CD4-positive, alpha-beta T cell (primary cell): ENCODE measurements at regions of chr1 and their contacts with region 1.

Region 1: GRCh38 chr1:171313835-171314320 is at the start of gene FMO4:
- DNase-seq: peak; percentile 57 to 97 (median 70)
- ATAC-seq: peak; percentile 100
- H3K4me3 ChIP-seq: peak within 1 kb of the TSS; percentile 41
- H3K4me3 Mint-ChIP-seq: peak within 1 kb of the TSS; percentile 66
- H3K27ac ChIP-seq: peak within 1 kb of the TSS in 1 of 2 donors; percentile 41
- H3K27ac Mint-ChIP-seq: peak within 1 kb of the TSS; percentile 81
- H3K4me1 ChIP-seq: no peaks in the 10 kb centered on the region
- H3K4me1 Mint-ChIP-seq: peaks cover 17% of the 10 kb centered on the region
- H3K27me3 ChIP-seq: no peaks in the 10 kb centered on the region
- H3K27me3 Mint-ChIP-seq: no peaks in the 10 kb centered on the region
- CTCF ChIP-seq: peak; percentile 78
- total RNA-seq, gene FMO4: 0.70 to 1.1 TPM

Region 2: DNA sequence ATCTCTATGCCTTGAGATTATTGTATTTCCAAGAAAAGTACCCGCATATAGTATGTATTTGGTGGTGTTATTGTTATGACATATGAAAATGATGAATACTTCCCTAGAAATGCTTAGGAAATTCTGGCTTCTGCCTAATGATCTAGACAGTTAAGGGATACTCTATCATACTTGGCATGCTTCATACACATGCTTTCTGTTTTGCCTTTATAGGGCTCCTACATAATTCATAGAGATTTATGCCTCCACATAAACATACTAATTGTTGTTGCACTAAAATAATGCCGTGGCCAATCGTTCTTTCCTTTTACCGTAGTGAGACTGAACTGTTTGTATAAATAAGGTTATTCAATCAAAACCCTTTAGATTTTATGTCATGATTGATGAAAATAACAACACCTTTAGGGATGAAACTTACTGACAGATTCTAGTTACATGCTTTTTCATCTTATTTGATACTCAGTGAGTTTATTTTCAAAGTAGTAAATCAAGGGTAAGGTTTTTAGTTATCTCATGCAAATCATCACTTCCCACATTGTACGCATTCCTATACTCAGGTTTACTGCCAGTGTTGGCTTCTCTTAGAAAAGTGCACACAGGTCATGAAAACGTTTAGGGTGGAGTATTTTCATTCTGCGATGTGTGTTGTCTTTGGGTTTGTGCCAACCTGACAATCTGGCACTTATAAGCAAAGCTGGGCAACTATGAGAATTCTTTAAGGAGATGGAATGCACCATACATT is 1379.7 kb before region 1 on chr1:
- CTCF ChIA-PET with region 1: no interaction called
- POLR2A ChIA-PET with region 1: no interaction called
- intact Hi-C with region 1: loop called (anchors 5 kb)
- DNase-seq: no peak
- ATAC-seq: no peak
- H3K4me3 ChIP-seq: no peak overlapping the region
- H3K4me3 Mint-ChIP-seq: no peak overlapping the region
- H3K27ac ChIP-seq: no peak overlapping the region
- H3K27ac Mint-ChIP-seq: no peak overlapping the region
- H3K4me1 ChIP-seq: no peaks in the 10 kb centered on the region
- H3K4me1 Mint-ChIP-seq: no peaks in the 10 kb centered on the region
- H3K27me3 ChIP-seq: no peaks in the 10 kb centered on the region
- H3K27me3 Mint-ChIP-seq: no peaks in the 10 kb centered on the region
- CTCF ChIP-seq: no peak

Region 3: GRCh38 chr1:170175056-170175455 is 1138.8 kb before region 1 on chr1:
- CTCF ChIA-PET with region 1: no interaction called
- POLR2A ChIA-PET with region 1: no interaction called
- intact Hi-C with region 1: no loop called
- DNase-seq: no peak
- ATAC-seq: no peak
- H3K4me3 ChIP-seq: no peak overlapping the region
- H3K4me3 Mint-ChIP-seq: no peak overlapping the region
- H3K27ac ChIP-seq: no peak overlapping the region
- H3K27ac Mint-ChIP-seq: no peak overlapping the region
- H3K4me1 ChIP-seq: no peaks in the 10 kb centered on the region
- H3K4me1 Mint-ChIP-seq: no peaks in the 10 kb centered on the region
- H3K27me3 ChIP-seq: no peaks in the 10 kb centered on the region
- H3K27me3 Mint-ChIP-seq: no peaks in the 10 kb centered on the region
- CTCF ChIP-seq: no peak

Region 4: DNA sequence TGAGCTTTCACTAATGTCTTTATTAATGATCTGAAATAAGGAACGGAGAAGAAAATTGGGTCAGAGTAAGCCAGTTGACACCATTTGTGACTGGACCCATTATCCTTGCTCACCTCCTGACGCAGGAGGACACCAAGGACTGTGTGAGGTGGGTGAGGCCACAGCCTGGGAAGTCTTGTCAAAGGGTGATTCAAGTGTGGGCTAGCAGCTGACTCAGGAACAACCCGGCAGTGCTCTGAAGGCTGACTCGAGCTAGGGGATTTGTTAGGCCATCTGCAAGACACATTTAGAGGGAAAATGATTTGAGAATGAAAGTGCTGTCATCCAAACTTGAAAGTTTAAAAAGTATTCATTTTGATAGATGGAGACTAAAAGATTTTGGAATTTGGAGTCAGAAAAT is 628.7 kb before region 1 on chr1:
- CTCF ChIA-PET with region 1: interaction called, 5 read pairs
- POLR2A ChIA-PET with region 1: no interaction called
- intact Hi-C with region 1: loop called in 1 of 2 experiments (anchors 5 kb)
- DNase-seq: no peak
- ATAC-seq: no peak
- H3K4me3 ChIP-seq: no peak overlapping the region
- H3K4me3 Mint-ChIP-seq: no peak overlapping the region
- H3K27ac ChIP-seq: no peak overlapping the region
- H3K27ac Mint-ChIP-seq: no peak overlapping the region
- H3K4me1 ChIP-seq: no peaks in the 10 kb centered on the region
- H3K4me1 Mint-ChIP-seq: no peaks in the 10 kb centered on the region
- H3K27me3 ChIP-seq: peaks cover 5 to 21% of the 10 kb centered on the region in 2 experiments
- H3K27me3 Mint-ChIP-seq: peaks cover 56% of the 10 kb centered on the region
- CTCF ChIP-seq: no peak

Region 5: GRCh38 chr1:171245458-171246064 is 68.3 kb before region 1 on chr1:
- CTCF ChIA-PET with region 1: interaction called, 16 read pairs
- POLR2A ChIA-PET with region 1: interaction called, 9 read pairs
- intact Hi-C with region 1: loop called (anchors 1 to 2 kb)
- DNase-seq: peak in 5 of 14 experiments; percentile 11 to 55 (median 39)
- ATAC-seq: no peak
- H3K4me3 ChIP-seq: no peak overlapping the region
- H3K4me3 Mint-ChIP-seq: no peak overlapping the region
- H3K27ac ChIP-seq: no peak overlapping the region
- H3K27ac Mint-ChIP-seq: no peak overlapping the region
- H3K4me1 ChIP-seq: no peaks in the 10 kb centered on the region
- H3K4me1 Mint-ChIP-seq: no peaks in the 10 kb centered on the region
- H3K27me3 ChIP-seq: peaks cover 6% of the 10 kb centered on the region in 2 experiments
- H3K27me3 Mint-ChIP-seq: peaks cover 53% of the 10 kb centered on the region
- CTCF ChIP-seq: peak; percentile 62